ENCODE measurements at regions of chr19 and their contacts with region 1.

Region 1: GRCh38 chr19:32570081-32570785 is 10.8 kb upstream of the PDCD5 start:
- DNase-seq: peak; percentile 30 to 63 (median 33)
- H3K4me3 ChIP-seq: no peak overlapping the region
- H3K4me3 Mint-ChIP-seq: peak overlapping the region in 4 of 7 donors; percentile 38 to 61 (median 55)
- H3K27ac ChIP-seq: no peak overlapping the region
- H3K27ac Mint-ChIP-seq: peak overlapping the region in 1 of 8 donors; percentile 1
- H3K4me1 ChIP-seq: peaks cover 5% of the 10 kb centered on the region
- H3K4me1 Mint-ChIP-seq: peaks cover 15 to 21% (median 19%) of the 10 kb centered on the region in 3 donors
- H3K27me3 ChIP-seq: no peaks in the 10 kb centered on the region
- H3K27me3 Mint-ChIP-seq: peaks cover 23 to 32% of the 10 kb centered on the region in 2 donors

Region 2: DNA sequence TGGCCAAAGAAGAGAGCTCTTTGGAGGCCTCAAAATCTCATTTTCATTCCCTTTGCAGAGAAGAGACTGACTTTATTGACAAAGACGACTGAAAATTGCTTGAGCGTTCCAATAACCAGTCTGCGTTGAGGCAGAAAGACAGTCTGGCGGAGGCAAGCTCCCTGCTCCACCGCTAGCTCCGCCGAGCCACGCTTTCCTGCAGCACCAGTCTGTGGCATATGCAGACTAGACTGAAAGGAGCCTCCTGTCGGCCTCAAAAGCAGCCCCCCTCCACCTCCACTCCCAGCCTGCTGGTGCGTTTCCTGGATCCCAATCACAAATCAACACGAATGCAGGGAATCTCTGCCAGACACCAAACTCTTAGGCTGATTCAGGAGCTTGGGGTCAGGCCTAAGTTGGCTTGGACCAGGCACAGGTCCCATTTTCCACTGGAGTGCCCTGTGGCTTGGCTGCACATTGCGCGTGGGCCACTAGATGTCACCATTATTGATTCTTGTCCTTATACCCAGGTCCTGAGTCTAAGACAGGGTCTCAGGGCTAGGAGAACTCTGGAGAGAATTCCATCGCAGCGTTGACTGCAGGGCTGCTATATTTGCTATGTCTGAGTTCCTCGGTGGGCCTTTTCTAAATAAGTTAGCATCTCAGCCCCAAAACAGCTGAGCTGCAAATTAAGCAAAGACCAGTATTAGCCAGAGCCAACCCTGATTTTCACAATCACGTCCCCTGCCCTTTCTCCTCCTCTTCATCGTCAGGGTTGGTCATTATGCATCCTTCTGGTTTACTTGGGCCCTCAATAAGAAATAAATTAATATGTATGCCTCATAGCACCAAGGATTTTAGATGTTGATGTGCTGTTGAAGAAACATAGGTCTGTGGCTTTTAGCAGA is 230.0 kb before region 1 on chr19:
- CTCF ChIA-PET with region 1: interaction called, 19 read pairs
- POLR2A ChIA-PET with region 1: no interaction called
- DNase-seq: peak in 4 of 5 donors; percentile 14 to 56 (median 21)
- H3K4me3 ChIP-seq: no peak overlapping the region
- H3K4me3 Mint-ChIP-seq: peak overlapping the region in 1 of 7 donors; percentile 51
- H3K27ac ChIP-seq: no peak overlapping the region
- H3K27ac Mint-ChIP-seq: peak overlapping the region in 1 of 8 donors; percentile 61
- H3K4me1 ChIP-seq: no peaks in the 10 kb centered on the region
- H3K4me1 Mint-ChIP-seq: peaks cover 0 to 3% (median 0%) of the 10 kb centered on the region in 3 donors
- H3K27me3 ChIP-seq: no peaks in the 10 kb centered on the region
- H3K27me3 Mint-ChIP-seq: peaks cover 4 to 6% of the 10 kb centered on the region in 2 donors

Region 3: DNA sequence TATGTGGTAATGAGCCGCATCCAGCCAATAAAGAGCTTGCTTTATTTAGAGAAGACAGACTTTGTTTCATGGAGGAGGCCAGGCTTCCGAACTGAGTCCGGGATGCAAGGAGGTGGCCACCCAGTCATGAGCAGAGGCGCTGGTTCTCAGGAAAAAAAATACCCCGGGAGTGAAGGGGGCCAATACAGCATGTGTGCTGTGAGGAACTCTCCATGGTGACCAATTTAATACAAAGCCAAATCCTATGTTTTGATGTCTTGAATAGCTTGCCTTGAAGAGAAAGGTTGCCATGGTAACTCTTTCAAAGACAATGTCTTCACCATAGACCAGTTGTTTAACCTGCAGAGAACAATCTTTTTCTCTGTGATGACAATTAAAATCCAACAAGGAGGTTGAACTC is 32.7 kb before region 1 on chr19:
- CTCF ChIA-PET with region 1: no interaction called
- POLR2A ChIA-PET with region 1: no interaction called
- DNase-seq: no peak
- H3K4me3 ChIP-seq: no peak overlapping the region
- H3K4me3 Mint-ChIP-seq: no peak overlapping the region
- H3K27ac ChIP-seq: no peak overlapping the region
- H3K27ac Mint-ChIP-seq: no peak overlapping the region
- H3K4me1 ChIP-seq: no peaks in the 10 kb centered on the region
- H3K4me1 Mint-ChIP-seq: peaks cover 0 to 6% (median 0%) of the 10 kb centered on the region in 3 donors
- H3K27me3 ChIP-seq: no peaks in the 10 kb centered on the region
- H3K27me3 Mint-ChIP-seq: peaks cover 14 to 33% of the 10 kb centered on the region in 2 donors